Body of pancreas (tissue), 4 donors: ENCODE measurements at regions of chr12 and their contacts with region 1.

Region 1: DNA sequence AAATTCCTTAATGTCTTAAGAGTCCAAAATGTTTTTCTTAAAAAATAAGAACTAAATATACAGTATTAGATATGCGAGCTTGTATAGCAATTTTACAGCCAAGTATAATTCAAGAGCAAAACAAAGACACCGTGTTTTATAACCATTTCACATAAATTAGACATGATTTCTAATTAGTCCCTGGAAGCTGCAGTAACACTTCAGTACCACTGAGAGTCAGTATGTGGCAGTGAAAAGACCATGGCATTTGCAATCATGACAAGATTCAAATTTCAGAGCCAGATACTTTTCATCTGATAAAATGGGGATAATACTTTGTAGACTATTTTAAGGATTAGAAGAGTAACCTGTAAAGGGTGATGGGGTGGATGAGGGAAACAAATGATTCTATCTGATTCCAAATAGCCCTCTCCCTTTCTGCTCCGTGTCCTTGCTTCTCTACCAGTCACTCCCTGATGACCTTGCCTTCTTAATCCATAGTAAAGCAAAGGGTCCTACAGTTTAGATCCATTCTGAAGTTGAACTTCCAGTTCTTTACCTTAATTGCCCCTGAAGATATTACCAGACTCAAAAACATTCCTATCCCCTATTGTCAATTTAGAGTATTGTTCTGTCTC is 145.4 kb upstream of the ABCD2 start:
- DNase-seq: peak in 1 of 4 donors; percentile 20
- ATAC-seq: peak; percentile 81
- H3K4me3 ChIP-seq: no peak overlapping the region
- H3K27ac ChIP-seq: no peak overlapping the region
- H3K4me1 ChIP-seq: no peaks in the 10 kb centered on the region
- H3K27me3 ChIP-seq: no peaks in the 10 kb centered on the region
- CTCF ChIP-seq: peak; percentile 42 to 91 (median 85)
- POLR2A ChIP-seq: no peak

Region 2: GRCh38 chr12:39595923-39596322 is 169.1 kb before region 1 on chr12:
- intact Hi-C with region 1: no loop called
- DNase-seq: no peak
- ATAC-seq: no peak
- H3K4me3 ChIP-seq: no peak overlapping the region
- H3K27ac ChIP-seq: no peak overlapping the region
- H3K4me1 ChIP-seq: no peaks in the 10 kb centered on the region
- H3K27me3 ChIP-seq: no peaks in the 10 kb centered on the region
- CTCF ChIP-seq: no peak
- POLR2A ChIP-seq: no peak

Region 3: GRCh38 chr12:39986674-39987073 is 221.6 kb after region 1 on chr12:
- intact Hi-C with region 1: loop called (anchors 5 kb)
- DNase-seq: no peak
- ATAC-seq: no peak
- H3K4me3 ChIP-seq: no peak overlapping the region
- H3K27ac ChIP-seq: no peak overlapping the region
- H3K4me1 ChIP-seq: no peaks in the 10 kb centered on the region
- H3K27me3 ChIP-seq: no peaks in the 10 kb centered on the region
- CTCF ChIP-seq: no peak
- POLR2A ChIP-seq: no peak

Region 4: GRCh38 chr12:40117818-40118217 is 352.8 kb after region 1 on chr12:
- intact Hi-C with region 1: loop called (anchors 10 kb)
- DNase-seq: no peak
- ATAC-seq: no peak
- H3K4me3 ChIP-seq: no peak overlapping the region
- H3K27ac ChIP-seq: no peak overlapping the region
- H3K4me1 ChIP-seq: no peaks in the 10 kb centered on the region
- H3K27me3 ChIP-seq: no peaks in the 10 kb centered on the region
- CTCF ChIP-seq: no peak
- POLR2A ChIP-seq: no peak